Heart left ventricle (tissue), 16 donors: ENCODE measurements at regions of chr7 and their contacts with region 1.

Region 1: GRCh38 chr7:35253710-35254495 is at the start of gene TBX20:
- DNase-seq: peak; percentile 77 to 91 (median 88)
- ATAC-seq: peak; percentile 38 to 89 (median 79)
- H3K4me3 ChIP-seq: peak within 1 kb of the TSS; percentile 47 to 90 (median 74)
- H3K27ac ChIP-seq: peak within 1 kb of the TSS; percentile 83 to 97 (median 90)
- H3K4me1 ChIP-seq: peaks cover 0 to 24% (median 3%) of the 10 kb centered on the region in 12 donors
- H3K27me3 ChIP-seq: peaks cover 0 to 100% (median 21%) of the 10 kb centered on the region in 9 donors
- CTCF ChIP-seq: no peak
- POLR2A ChIP-seq: peak; percentile 45 to 95
- total RNA-seq, gene TBX20: 84.8 to 155 (median 127) TPM

Region 2: DNA sequence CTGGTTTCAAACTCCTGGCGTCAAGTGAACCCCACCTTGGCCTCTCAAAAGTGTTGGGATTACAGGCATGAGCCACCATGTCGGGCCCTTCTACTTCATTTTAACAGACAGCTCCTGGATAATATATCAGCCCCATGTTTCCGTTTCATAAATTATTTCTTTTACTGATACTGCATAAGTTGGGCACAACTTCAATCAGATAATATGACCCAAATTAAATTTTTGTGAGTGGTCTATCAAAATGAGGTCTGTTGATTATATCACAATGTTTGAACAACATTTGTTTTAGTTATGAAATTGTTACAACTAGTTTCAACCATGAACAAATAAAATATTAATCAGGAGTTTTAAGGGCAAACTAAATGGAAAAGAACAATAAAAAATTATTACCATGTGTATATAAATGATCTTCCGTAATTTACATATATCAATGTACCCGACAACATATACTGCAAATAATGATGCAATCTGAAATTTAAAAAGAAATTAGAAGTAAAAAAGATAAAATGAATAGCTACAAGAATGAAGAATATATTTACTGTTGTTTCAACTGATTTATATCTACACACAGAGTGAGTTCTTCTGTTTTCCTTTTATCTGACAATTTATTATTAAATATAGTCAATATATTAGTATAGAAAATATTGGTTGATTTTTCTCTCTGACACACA is 287.3 kb before region 1 on chr7:
- intact Hi-C with region 1: no loop called
- DNase-seq: no peak
- ATAC-seq: no peak
- H3K4me3 ChIP-seq: no peak overlapping the region
- H3K27ac ChIP-seq: no peak overlapping the region
- H3K4me1 ChIP-seq: peaks cover 0 to 3% (median 0%) of the 10 kb centered on the region in 12 donors
- H3K27me3 ChIP-seq: no peaks in the 10 kb centered on the region
- CTCF ChIP-seq: no peak
- POLR2A ChIP-seq: no peak

Region 3: GRCh38 chr7:35280902-35281301 is 27.0 kb after region 1 on chr7:
- intact Hi-C with region 1: no loop called
- DNase-seq: no peak
- ATAC-seq: no peak
- H3K4me3 ChIP-seq: no peak overlapping the region
- H3K27ac ChIP-seq: no peak overlapping the region
- H3K4me1 ChIP-seq: peaks cover 0 to 13% (median 0%) of the 10 kb centered on the region in 12 donors
- H3K27me3 ChIP-seq: no peaks in the 10 kb centered on the region
- CTCF ChIP-seq: no peak
- POLR2A ChIP-seq: no peak

Region 4: GRCh38 chr7:35374538-35375257 is 120.8 kb after region 1 on chr7:
- intact Hi-C with region 1: loop called in 7 of 10 experiments (anchors 2 to 10 kb)
- DNase-seq: peak; percentile 65 to 89 (median 75)
- ATAC-seq: peak; percentile 94 to 96 (median 95)
- H3K4me3 ChIP-seq: peak overlapping the region in 1 of 12 donors; percentile 1
- H3K27ac ChIP-seq: peak overlapping the region; percentile 49 to 92 (median 67)
- H3K4me1 ChIP-seq: peaks cover 0 to 25% (median 4%) of the 10 kb centered on the region in 12 donors
- H3K27me3 ChIP-seq: no peaks in the 10 kb centered on the region
- CTCF ChIP-seq: no peak
- POLR2A ChIP-seq: no peak

Region 5: DNA sequence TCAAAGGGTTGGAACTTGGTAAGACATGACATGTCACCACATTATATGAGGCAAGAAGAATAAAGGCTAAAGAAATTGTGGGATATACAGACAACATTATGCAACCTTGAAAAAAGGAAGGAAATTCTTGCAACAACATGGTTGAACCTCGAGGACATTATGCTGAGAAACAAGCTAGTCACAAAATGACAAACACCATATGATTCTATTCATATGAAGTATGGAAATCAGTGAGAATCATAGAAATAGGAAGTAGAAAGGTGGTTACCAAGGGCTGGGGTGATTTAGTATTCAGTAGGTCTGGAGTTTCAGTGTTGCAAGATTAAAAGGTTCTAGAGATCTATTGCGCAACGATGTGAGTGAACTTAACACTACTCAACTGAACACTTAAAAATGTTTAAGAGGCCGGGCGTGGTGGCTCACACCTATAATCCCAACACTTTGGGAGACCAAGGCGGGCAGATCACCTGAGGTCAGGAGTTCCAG is 126.9 kb after region 1 on chr7:
- intact Hi-C with region 1: loop called in 6 of 10 experiments (anchors 2 to 10 kb)
- DNase-seq: no peak
- ATAC-seq: no peak
- H3K4me3 ChIP-seq: no peak overlapping the region
- H3K27ac ChIP-seq: no peak overlapping the region
- H3K4me1 ChIP-seq: peaks cover 0 to 12% (median under 1%) of the 10 kb centered on the region in 12 donors
- H3K27me3 ChIP-seq: no peaks in the 10 kb centered on the region
- CTCF ChIP-seq: no peak
- POLR2A ChIP-seq: no peak

Region 6: DNA sequence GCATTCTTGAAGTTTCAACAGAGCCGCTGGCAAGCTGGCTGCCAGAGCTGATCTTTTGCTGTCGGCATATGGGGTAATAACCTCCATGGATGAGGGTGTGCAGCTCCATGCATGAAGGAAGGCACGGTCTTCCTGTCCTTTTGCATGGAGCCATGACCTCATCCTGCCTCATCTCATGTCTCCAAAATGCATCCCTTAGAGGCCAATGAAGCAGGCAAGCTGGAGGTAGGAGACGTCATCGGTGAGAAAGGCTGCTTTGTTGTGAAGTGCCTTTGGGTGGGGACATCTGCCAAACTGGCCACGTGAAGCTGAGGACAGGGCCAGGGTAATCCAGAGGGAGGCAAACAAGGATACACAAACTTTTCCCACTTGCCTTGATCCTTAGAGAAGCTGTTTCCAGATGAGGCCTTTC is 161.5 kb after region 1 on chr7:
- intact Hi-C with region 1: loop called in 8 of 10 experiments (anchors 5 to 10 kb)
- DNase-seq: peak; percentile 78 to 88 (median 82)
- ATAC-seq: peak; percentile 81 to 92 (median 84)
- H3K4me3 ChIP-seq: no peak overlapping the region
- H3K27ac ChIP-seq: peak overlapping the region in 8 of 12 donors; percentile 16 to 69 (median 50)
- H3K4me1 ChIP-seq: peaks cover 0 to 55% (median 13%) of the 10 kb centered on the region in 12 donors
- H3K27me3 ChIP-seq: peaks cover 0 to under 1% (median 0%) of the 10 kb centered on the region in 9 donors
- CTCF ChIP-seq: no peak
- POLR2A ChIP-seq: no peak

Region 7: GRCh38 chr7:35424869-35425495 is 171.1 kb after region 1 on chr7:
- intact Hi-C with region 1: loop called in 3 of 10 experiments (anchors 2 to 5 kb)
- DNase-seq: peak; percentile 55 to 79 (median 65)
- ATAC-seq: peak; percentile 55 to 77 (median 72)
- H3K4me3 ChIP-seq: no peak overlapping the region
- H3K27ac ChIP-seq: no peak overlapping the region
- H3K4me1 ChIP-seq: peaks cover 0 to 13% (median 2%) of the 10 kb centered on the region in 12 donors
- H3K27me3 ChIP-seq: peaks cover 0 to 3% (median 0%) of the 10 kb centered on the region in 9 donors
- CTCF ChIP-seq: peak; percentile 64 to 79 (median 70)
- POLR2A ChIP-seq: no peak

Region 8: DNA sequence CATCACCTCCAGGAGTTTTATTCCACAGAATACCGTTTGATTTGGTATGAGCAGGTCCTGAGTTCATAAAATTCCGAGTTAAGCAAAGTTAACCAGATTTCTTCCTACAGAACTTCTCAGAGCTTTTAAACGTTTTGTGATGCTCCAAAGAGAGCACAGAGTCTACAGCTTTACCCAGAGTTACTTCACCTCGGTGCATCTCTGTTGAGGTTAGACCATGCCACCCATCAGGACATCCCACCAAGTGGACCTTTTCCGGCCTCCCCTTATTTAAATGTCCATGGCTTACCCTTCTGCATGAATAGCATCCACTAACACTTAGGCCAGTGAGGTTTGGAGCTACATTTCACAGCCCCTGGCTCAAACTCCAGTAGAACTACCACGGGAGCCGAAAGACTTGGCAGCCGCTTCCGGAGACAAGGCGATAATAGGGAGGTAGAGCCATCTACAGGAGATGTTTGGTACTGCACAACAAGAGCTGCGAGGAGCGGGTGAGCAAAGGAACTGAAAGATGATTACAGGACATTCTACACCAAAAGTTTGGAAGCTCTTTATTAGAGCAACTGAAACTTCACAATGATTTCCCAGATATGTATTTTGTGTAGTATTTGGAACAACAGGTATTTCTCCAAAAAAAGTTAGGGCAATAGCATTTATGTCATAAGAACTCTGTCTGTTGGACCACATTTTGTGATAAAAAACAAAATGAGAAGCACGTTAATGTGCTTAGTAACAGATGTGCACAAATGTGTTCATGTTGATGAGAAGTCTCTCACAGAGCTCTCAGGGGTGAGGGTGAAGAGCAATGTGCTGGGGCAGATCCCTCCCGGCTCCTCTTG is 266.3 kb after region 1 on chr7:
- intact Hi-C with region 1: loop called in 4 of 10 experiments (anchors 5 to 10 kb)
- DNase-seq: peak; percentile 76 to 89 (median 80)
- ATAC-seq: peak; percentile 83 to 92 (median 88)
- H3K4me3 ChIP-seq: no peak overlapping the region
- H3K27ac ChIP-seq: peak overlapping the region in 6 of 12 donors; percentile 3 to 47 (median 20)
- H3K4me1 ChIP-seq: peaks cover 0 to 38% (median 11%) of the 10 kb centered on the region in 12 donors
- H3K27me3 ChIP-seq: no peaks in the 10 kb centered on the region
- CTCF ChIP-seq: peak; percentile 74 to 93 (median 86)
- POLR2A ChIP-seq: no peak